Ascending aorta (tissue), 2 donors: ENCODE measurements at regions of chr21 and their contacts with region 1.

Region 1: GRCh38 chr21:44686000-44686781 is 4.2 kb upstream of the KRTAP12-1 start:
- DNase-seq: peak in 1 of 2 donors; percentile 27
- H3K4me3 ChIP-seq: no peak overlapping the region
- H3K27ac ChIP-seq: no peak overlapping the region
- H3K4me1 ChIP-seq: no peaks in the 10 kb centered on the region
- H3K27me3 ChIP-seq: no peaks in the 10 kb centered on the region
- CTCF ChIP-seq: no peak

Region 2: DNA sequence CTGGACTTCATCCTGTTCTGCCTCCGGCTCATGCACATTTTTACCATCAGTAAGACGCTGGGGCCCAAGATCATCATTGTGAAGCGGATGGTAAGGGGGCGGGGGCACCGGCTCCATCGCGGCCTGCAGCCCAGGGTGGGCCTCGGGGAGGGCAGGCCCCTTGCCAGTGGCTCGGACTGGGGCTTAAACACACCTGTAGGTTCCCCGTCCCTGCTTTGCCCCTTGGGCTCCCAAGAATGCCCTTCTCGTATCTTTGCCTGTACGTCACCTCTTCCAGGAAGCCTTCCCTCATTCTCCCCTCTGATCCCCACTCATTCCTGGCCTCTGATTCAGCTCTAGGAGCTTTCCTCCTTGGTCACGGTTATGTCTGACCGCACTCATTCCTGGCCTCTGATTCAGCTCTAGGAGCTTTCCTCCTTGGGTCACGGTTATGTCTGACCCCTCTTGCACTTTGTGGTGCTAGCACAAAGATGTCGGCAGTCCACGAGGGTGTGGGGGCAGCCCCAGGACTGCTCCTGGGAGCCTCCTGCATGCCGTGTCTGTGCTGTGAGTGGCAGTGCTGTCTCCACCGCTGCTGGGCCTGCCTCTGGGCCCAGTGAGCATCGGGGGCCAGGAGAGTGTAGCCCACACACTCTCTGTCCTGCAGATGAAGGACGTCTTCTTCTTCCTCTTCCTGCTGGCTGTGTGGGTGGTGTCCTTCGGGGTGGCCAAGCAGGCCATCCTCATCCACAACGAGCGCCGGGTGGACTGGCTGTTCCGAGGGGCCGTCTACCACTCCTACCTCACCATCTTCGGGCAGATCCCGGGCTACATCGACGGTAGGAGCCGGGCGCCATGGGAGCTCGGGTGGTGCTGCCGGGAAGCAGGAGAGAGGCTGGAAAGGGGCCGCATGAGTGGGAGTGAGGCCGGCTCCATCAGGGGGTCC is 280.0 kb before region 1 on chr21:
- intact Hi-C with region 1: loop called (anchors 10 kb)
- DNase-seq: peak in 1 of 2 donors; percentile 51
- H3K4me3 ChIP-seq: no peak overlapping the region
- H3K27ac ChIP-seq: no peak overlapping the region
- H3K4me1 ChIP-seq: no peaks in the 10 kb centered on the region
- H3K27me3 ChIP-seq: no peaks in the 10 kb centered on the region
- CTCF ChIP-seq: no peak

Region 3: GRCh38 chr21:44647222-44647552 is 39.0 kb before region 1 on chr21:
- intact Hi-C with region 1: no loop called
- DNase-seq: no peak
- H3K4me3 ChIP-seq: no peak overlapping the region
- H3K27ac ChIP-seq: no peak overlapping the region
- H3K4me1 ChIP-seq: no peaks in the 10 kb centered on the region
- H3K27me3 ChIP-seq: no peaks in the 10 kb centered on the region
- CTCF ChIP-seq: no peak